CD14-positive monocyte (primary cell): ENCODE measurements at regions of chr18 and their contacts with region 1.

Region 1: DNA sequence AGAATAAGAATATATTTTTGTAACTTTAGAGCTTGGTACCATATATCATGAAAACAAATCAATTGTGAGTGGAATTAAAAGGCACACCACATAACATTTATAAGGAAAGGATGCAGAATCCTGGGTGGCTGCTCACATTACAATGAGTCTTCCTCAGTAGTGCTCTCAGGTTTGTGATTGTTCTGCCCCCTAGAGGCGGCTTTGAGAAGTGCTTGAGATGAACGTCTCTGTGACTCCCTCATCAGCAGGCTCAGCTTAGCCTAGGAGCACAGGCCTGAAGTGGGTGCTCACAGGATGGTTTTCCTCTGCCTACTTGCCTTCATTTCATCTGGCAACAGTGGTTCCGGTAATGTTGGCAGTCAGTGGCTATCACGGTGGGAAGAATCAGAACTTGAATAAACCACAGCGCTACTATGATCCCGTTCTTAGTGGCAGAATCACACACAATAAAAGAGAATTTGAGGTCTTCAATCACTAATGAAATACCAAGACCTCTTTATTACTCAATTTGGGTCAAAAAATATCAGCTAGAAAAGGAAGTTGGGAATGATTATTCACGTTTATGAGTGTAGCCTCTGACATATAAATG is 38.1 kb upstream of the B4GALT6 start:
- DNase-seq: peak; percentile 62 to 76 (median 69)
- H3K4me3 ChIP-seq: no peak overlapping the region
- H3K4me3 Mint-ChIP-seq: no peak overlapping the region
- H3K27ac ChIP-seq: no peak overlapping the region
- H3K27ac Mint-ChIP-seq: peak overlapping the region in 1 of 7 donors; percentile 27
- H3K4me1 ChIP-seq: peaks cover 7% of the 10 kb centered on the region in 2 donors
- H3K4me1 Mint-ChIP-seq: peaks cover 16% of the 10 kb centered on the region
- H3K27me3 ChIP-seq: peaks cover 2 to 15% of the 10 kb centered on the region in 2 donors
- H3K27me3 Mint-ChIP-seq: peaks cover 18 to 27% (median 23%) of the 10 kb centered on the region in 3 donors
- CTCF ChIP-seq: peak; percentile 92

Region 2: DNA sequence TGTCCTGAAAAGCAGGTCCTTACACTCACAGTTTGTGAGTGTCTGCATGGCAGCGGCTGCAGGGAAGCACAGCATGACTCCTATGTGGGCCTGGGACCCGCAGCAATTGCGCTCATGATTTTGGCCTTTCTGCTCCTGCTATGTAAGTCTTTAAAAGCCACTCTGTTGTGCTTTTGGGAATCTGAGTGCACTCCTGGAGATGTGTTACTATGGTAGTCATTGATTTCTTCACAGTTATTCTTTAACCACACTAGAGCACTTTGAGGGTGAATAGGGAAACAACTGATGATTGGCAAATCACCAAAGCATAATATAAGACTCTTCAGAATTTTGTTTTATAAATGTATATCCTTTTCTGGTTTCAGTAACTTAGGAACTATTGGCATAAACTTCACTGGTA is 183.6 kb before region 1 on chr18:
- intact Hi-C with region 1: no loop called
- DNase-seq: no peak
- H3K4me3 ChIP-seq: no peak overlapping the region
- H3K4me3 Mint-ChIP-seq: no peak overlapping the region
- H3K27ac ChIP-seq: no peak overlapping the region
- H3K27ac Mint-ChIP-seq: peak overlapping the region in 1 of 7 donors; percentile 35
- H3K4me1 ChIP-seq: peaks cover 7 to 9% of the 10 kb centered on the region in 2 donors
- H3K4me1 Mint-ChIP-seq: peaks cover 8% of the 10 kb centered on the region
- H3K27me3 ChIP-seq: no peaks in the 10 kb centered on the region
- H3K27me3 Mint-ChIP-seq: peaks cover 0 to 3% (median 0%) of the 10 kb centered on the region in 3 donors
- CTCF ChIP-seq: no peak

Region 3: DNA sequence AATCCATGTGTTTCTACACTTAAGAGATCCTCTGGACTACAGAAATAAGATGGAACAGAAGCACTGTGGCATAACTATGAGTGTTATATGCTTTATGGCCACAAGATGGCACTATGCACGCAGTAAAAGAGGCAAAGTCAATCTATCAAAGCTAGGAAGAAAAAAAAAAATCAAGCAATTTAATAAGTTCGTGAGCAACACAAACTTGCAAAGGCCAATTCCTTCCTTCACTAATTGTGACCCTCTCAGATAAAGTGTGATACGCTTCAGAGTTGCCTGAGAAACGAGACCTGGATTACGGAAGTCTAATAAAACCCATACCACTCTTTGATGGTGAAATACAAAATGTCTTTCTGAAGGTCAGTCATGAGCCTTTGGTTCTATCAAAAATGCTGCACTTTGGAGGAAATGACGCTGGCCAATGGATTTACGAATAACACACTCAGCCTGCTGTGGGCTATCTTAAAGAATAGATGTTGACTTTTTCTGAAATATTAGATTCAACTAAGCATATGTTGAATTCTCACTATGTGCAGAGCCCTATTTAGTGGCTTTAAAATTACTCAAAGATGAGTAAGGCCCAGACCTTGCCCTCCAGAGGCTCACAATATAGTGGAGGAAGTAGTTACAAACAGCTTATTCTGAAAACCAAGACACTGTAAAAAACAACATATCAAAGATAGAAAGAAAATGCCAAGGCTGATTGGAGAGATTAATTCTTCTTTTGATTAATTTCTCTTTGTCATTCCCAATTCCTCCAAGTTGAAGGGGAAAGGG is 166.3 kb before region 1 on chr18:
- intact Hi-C with region 1: loop called (anchors 2 to 5 kb)
- DNase-seq: peak; percentile 36 to 62 (median 47)
- H3K4me3 ChIP-seq: no peak overlapping the region
- H3K4me3 Mint-ChIP-seq: peak overlapping the region in 1 of 2 donors; percentile 59
- H3K27ac ChIP-seq: no peak overlapping the region
- H3K27ac Mint-ChIP-seq: peak overlapping the region in 1 of 7 donors; percentile 25
- H3K4me1 ChIP-seq: no peaks in the 10 kb centered on the region
- H3K4me1 Mint-ChIP-seq: peaks cover 6% of the 10 kb centered on the region
- H3K27me3 ChIP-seq: no peaks in the 10 kb centered on the region
- H3K27me3 Mint-ChIP-seq: peaks cover 0 to 1% (median 1%) of the 10 kb centered on the region in 3 donors
- CTCF ChIP-seq: peak; percentile 94

Region 4: DNA sequence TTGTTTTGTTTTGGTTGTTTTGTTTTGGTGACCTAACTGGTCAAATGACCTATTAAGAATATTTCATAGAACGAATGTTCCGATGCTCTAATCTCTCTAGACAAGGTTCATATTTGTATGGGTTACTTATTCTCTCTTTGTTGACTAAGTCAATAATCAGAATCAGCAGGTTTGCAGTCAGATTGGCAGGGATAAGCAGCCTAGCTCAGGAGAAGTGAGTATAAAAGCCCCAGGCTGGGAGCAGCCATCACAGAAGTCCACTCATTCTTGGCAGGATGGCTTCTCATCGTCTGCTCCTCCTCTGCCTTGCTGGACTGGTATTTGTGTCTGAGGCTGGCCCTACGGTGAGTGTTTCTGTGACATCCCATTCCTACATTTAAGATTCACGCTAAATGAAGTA is 130.8 kb before region 1 on chr18 and contains the start of gene TTR:
- intact Hi-C with region 1: no loop called
- DNase-seq: no peak
- H3K4me3 ChIP-seq: no peak within 1 kb of the TSS
- H3K4me3 Mint-ChIP-seq: no peak within 1 kb of the TSS
- H3K27ac ChIP-seq: no peak within 1 kb of the TSS
- H3K27ac Mint-ChIP-seq: no peak within 1 kb of the TSS
- H3K4me1 ChIP-seq: no peaks in the 10 kb centered on the region
- H3K4me1 Mint-ChIP-seq: no peaks in the 10 kb centered on the region
- H3K27me3 ChIP-seq: no peaks in the 10 kb centered on the region
- H3K27me3 Mint-ChIP-seq: no peaks in the 10 kb centered on the region
- CTCF ChIP-seq: no peak
- polyA plus RNA-seq, gene TTR: not detected